ENCODE measurements at regions of chr6 and their contacts with region 1.

Region 1: GRCh38 chr6:34696739-34697543 is at the start of gene ILRUN:
- DNase-seq: peak; percentile 98
- H3K4me3 Mint-ChIP-seq: peak within 1 kb of the TSS; percentile 100
- H3K27ac Mint-ChIP-seq: peak within 1 kb of the TSS; percentile 99
- H3K4me1 Mint-ChIP-seq: peaks cover 44% of the 10 kb centered on the region
- H3K27me3 Mint-ChIP-seq: no peaks in the 10 kb centered on the region
- total RNA-seq, gene ILRUN: 51.4 to 53.3 TPM

Region 2: GRCh38 chr6:34656378-34657036 is 40.4 kb before region 1 on chr6:
- CTCF ChIA-PET with region 1: no interaction called
- intact Hi-C with region 1: loop called (anchors 5 kb)
- DNase-seq: peak; percentile 66
- H3K4me3 Mint-ChIP-seq: peak overlapping the region; percentile 61
- H3K27ac Mint-ChIP-seq: peak overlapping the region; percentile 89
- H3K4me1 Mint-ChIP-seq: peaks cover 44% of the 10 kb centered on the region
- H3K27me3 Mint-ChIP-seq: no peaks in the 10 kb centered on the region

Region 3: GRCh38 chr6:34745277-34746103 is 48.5 kb after region 1 on chr6:
- CTCF ChIA-PET with region 1: no interaction called
- intact Hi-C with region 1: no loop called
- DNase-seq: no peak
- H3K4me3 Mint-ChIP-seq: no peak overlapping the region
- H3K27ac Mint-ChIP-seq: no peak overlapping the region
- H3K4me1 Mint-ChIP-seq: no peaks in the 10 kb centered on the region
- H3K27me3 Mint-ChIP-seq: no peaks in the 10 kb centered on the region

Region 4: GRCh38 chr6:35496841-35497570 is 800.1 kb after region 1 on chr6 and contains the start of gene TEAD3:
- CTCF ChIA-PET with region 1: no interaction called
- intact Hi-C with region 1: no loop called
- DNase-seq: peak; percentile 47
- H3K4me3 Mint-ChIP-seq: peak within 1 kb of the TSS; percentile 77
- H3K27ac Mint-ChIP-seq: peak within 1 kb of the TSS; percentile 67
- H3K4me1 Mint-ChIP-seq: peaks cover 14% of the 10 kb centered on the region
- H3K27me3 Mint-ChIP-seq: peaks cover 6% of the 10 kb centered on the region
- total RNA-seq, gene TEAD3: 1.1 to 1.4 TPM

Measured in activated naive CD4-positive, alpha-beta T cell treated with anti-CD3 and anti-CD28 coated beads for 36 hours (primary cell).